ENCODE measurements at regions of chr5 and their contacts with region 1.

Region 1: DNA sequence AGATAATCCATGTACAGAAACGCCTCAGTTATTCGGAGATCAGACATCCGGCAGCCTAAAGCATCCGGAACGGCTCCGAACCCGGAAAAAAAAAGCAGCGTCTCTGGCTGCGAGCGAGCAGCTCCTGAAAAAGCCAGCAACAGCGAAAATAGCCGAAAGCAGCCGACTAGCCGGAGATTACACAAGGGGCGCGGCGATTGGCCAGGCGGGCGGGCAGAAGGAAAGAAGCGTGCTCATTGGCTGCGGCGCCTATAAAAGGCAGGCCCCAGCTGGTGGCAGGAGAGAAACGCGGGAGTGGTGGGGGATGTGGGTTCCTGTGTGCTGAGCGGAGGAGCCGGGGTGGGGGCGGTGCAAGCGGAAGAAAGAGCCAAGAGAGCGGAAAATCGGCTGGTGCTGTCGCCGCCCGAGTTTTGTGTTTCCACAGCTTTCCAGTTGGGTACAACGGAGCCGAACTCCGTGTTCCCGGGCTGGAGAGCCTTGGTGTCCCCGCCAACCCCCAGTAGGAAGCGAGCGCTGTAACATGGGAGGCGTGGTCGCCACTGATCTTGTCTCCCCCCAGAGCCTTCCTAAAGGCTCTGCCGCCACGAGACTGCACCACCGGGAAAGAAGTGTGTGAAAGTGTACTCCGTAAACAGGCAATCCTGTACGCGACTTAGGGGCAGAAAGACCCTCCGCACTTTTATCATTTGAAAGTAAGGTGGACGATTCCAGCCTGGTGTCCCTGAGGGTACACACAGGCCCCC is at the start of gene ARL15:
- DNase-seq: peak; percentile 96 to 98
- H3K4me3 ChIP-seq: peak within 1 kb of the TSS; percentile 62
- H3K4me1 ChIP-seq: peaks cover 11% of the 10 kb centered on the region
- H3K27me3 ChIP-seq: 0 out of 2 replicates have a peak, but pooled peaks cover 2% of the 10 kb centered on the region

Region 2: DNA sequence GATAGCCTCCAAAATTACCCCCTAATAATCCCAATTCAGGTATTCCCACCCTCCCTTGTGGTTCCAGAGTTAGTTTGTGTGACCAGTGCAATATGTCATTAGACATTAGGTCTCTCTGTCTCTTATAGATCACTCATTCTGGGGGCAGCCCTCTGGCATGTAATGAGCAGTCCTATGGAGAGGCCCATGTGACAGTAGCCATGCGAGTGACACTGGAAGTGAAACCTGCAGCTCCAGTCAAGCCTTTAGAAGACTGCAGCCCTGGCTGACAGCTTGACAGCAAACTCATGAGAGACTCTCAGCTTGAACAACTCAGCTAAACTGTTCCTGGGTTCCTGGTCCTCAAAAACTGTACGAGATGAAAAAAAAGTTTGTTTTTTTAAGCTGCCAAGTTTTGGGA is 90.9 kb after region 1 on chr5:
- in situ Hi-C with region 1: loop called (anchors 5 kb)
- DNase-seq: no peak
- H3K4me3 ChIP-seq: no peak overlapping the region
- H3K4me1 ChIP-seq: peaks cover 37% of the 10 kb centered on the region
- H3K27me3 ChIP-seq: no peaks in the 10 kb centered on the region

Measured in HAP-1 (cell line).